IMR-90 (cell line): ENCODE measurements at regions of chr12 and their contacts with region 1.

Region 1: DNA sequence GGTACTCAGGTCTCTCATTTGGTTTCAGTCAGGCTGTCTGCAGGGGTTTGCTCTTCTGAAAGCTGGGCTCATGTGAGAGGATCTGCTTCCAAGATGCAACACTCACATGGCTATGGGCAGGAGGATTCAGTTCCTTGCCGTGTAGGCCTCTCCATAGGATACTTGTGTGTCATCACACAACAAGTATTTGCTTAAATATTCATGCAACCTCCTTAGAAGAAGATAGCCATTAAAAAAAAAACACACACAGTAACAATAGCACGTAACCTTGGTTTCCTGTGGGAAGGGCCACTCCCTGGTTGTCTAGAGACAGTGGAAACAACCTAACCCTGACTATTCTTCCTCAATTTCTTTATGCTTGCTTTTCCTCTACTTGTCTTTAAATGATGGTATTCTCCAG is 31.8 kb upstream of the CLEC4E start:
- DNase-seq: no peak
- ATAC-seq: no peak
- H3K4me3 ChIP-seq: no peak overlapping the region
- H3K27ac ChIP-seq: no peak overlapping the region
- H3K4me1 ChIP-seq: no peaks in the 10 kb centered on the region
- H3K27me3 ChIP-seq: no peaks in the 10 kb centered on the region
- CTCF ChIP-seq: no peak
- POLR2A ChIP-seq: no peak
- RAD21 ChIP-seq: no peak

Region 2: GRCh38 chr12:7571257-7571656 is 1001.2 kb before region 1 on chr12:
- CTCF ChIA-PET with region 1: no interaction called
- POLR2A ChIA-PET with region 1: no interaction called
- dilution Hi-C with region 1: no loop called
- in situ Hi-C with region 1: no loop called
- intact Hi-C with region 1: no loop called
- DNase-seq: no peak
- ATAC-seq: no peak
- H3K4me3 ChIP-seq: no peak overlapping the region
- H3K27ac ChIP-seq: no peak overlapping the region
- H3K4me1 ChIP-seq: no peaks in the 10 kb centered on the region
- H3K27me3 ChIP-seq: no peaks in the 10 kb centered on the region
- CTCF ChIP-seq: no peak
- POLR2A ChIP-seq: no peak
- RAD21 ChIP-seq: no peak

Region 3: GRCh38 chr12:7872566-7873319 is 699.8 kb before region 1 on chr12 and contains the start of gene SLC2A14:
- CTCF ChIA-PET with region 1: no interaction called
- POLR2A ChIA-PET with region 1: no interaction called
- dilution Hi-C with region 1: no loop called
- in situ Hi-C with region 1: no loop called
- intact Hi-C with region 1: no loop called
- DNase-seq: no peak
- ATAC-seq: no peak; the same call in 1 of the 2 replicates
- H3K4me3 ChIP-seq: no peak within 1 kb of the TSS
- H3K27ac ChIP-seq: no peak within 1 kb of the TSS
- H3K4me1 ChIP-seq: no peaks in the 10 kb centered on the region
- H3K27me3 ChIP-seq: peaks cover 31% of the 10 kb centered on the region
- CTCF ChIP-seq: no peak
- POLR2A ChIP-seq: no peak
- RAD21 ChIP-seq: no peak
- total RNA-seq, gene SLC2A14: under 0.01 TPM in 1 of 2 replicates, not detected in the other

Region 4: DNA sequence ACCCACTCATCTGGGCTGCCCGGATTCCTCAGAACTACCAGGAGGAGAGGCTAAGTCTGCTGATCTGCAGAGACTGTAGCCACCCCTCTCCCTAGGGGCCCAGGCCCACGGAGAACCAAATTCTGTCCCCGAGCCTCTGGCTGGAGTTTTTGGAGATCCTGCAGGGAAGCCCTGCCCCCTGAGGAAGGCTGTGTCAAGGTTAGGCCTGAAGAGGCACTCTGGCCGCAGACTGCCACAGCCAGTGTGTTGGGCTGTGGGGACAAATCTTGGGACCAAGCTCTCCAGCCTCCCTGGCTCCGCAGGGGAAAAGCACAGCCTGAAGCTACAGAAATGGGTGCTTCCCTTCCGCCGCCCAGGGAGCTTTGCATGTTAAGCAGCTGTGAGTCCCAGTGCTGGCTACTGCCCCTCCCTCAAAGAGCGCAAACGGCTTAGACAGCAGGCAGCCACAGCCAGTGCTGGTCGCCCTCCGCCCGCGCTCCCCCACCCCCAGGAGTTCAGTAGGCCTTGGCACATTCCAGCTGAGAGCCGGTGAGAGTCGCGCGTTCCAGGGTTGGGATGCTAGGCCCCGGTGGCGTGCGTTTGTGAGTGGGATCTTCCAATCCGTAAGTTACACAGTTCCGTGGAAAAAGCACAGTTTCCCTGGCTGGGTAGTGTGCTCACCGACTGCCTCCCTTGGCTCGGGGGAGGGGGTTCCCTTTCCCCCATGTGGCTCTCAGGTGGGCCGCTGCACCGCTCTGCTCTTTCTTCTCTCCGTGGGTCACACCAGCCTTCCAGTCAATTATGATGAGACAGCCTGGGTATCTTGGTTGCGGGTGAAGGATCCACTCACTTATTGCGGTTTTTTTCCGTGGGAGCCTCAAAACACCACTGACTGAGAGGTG is 45.0 kb before region 1 on chr12:
- CTCF ChIA-PET with region 1: no interaction called
- POLR2A ChIA-PET with region 1: interaction called, 13 read pairs
- dilution Hi-C with region 1: no loop called
- in situ Hi-C with region 1: no loop called
- intact Hi-C with region 1: no loop called
- DNase-seq: no peak
- ATAC-seq: no peak
- H3K4me3 ChIP-seq: no peak overlapping the region
- H3K27ac ChIP-seq: no peak overlapping the region
- H3K4me1 ChIP-seq: no peaks in the 10 kb centered on the region
- H3K27me3 ChIP-seq: no peaks in the 10 kb centered on the region
- CTCF ChIP-seq: no peak
- POLR2A ChIP-seq: no peak
- RAD21 ChIP-seq: no peak

Region 5: GRCh38 chr12:8609061-8609570 is 36.6 kb after region 1 on chr12:
- CTCF ChIA-PET with region 1: no interaction called
- POLR2A ChIA-PET with region 1: interaction called, 17 read pairs
- dilution Hi-C with region 1: no loop called
- in situ Hi-C with region 1: no loop called
- intact Hi-C with region 1: no loop called
- DNase-seq: peak; percentile 47
- ATAC-seq: peak; percentile 82
- H3K4me3 ChIP-seq: no peak overlapping the region
- H3K27ac ChIP-seq: no peak overlapping the region
- H3K4me1 ChIP-seq: no peaks in the 10 kb centered on the region
- H3K27me3 ChIP-seq: no peaks in the 10 kb centered on the region
- CTCF ChIP-seq: peak; percentile 58
- POLR2A ChIP-seq: no peak
- RAD21 ChIP-seq: peak; percentile 35; the same call in 1 of the 2 replicates